ENCODE measurements at regions of chr19 and their contacts with region 1.

Region 1: GRCh38 chr19:57389730-57390598 is at the start of gene ZNF548:
- DNase-seq: peak; percentile 92
- H3K4me3 Mint-ChIP-seq: peak within 1 kb of the TSS; percentile 94
- H3K27ac Mint-ChIP-seq: peak within 1 kb of the TSS; percentile 94
- H3K4me1 Mint-ChIP-seq: peaks cover 30% of the 10 kb centered on the region
- H3K27me3 Mint-ChIP-seq: no peaks in the 10 kb centered on the region
- total RNA-seq, gene ZNF548: 11.3 and 12.1 TPM in 2 replicates

Region 2: GRCh38 chr19:55536951-55537740 is 1852.8 kb before region 1 on chr19 and contains the start of gene SBK2:
- intact Hi-C with region 1: no loop called
- DNase-seq: no peak
- H3K4me3 Mint-ChIP-seq: no peak within 1 kb of the TSS
- H3K27ac Mint-ChIP-seq: no peak within 1 kb of the TSS
- H3K4me1 Mint-ChIP-seq: no peaks in the 10 kb centered on the region
- H3K27me3 Mint-ChIP-seq: no peaks in the 10 kb centered on the region
- total RNA-seq, gene SBK2: not detected in 2 replicates

Region 3: GRCh38 chr19:57227502-57227901 is 162.5 kb before region 1 on chr19:
- intact Hi-C with region 1: no loop called
- DNase-seq: no peak
- H3K4me3 Mint-ChIP-seq: no peak overlapping the region
- H3K27ac Mint-ChIP-seq: no peak overlapping the region
- H3K4me1 Mint-ChIP-seq: no peaks in the 10 kb centered on the region
- H3K27me3 Mint-ChIP-seq: no peaks in the 10 kb centered on the region

Region 4: GRCh38 chr19:57240311-57241090 is 149.5 kb before region 1 on chr19 and contains the start of gene ZNF805:
- intact Hi-C with region 1: loop called (anchors 1 kb)
- DNase-seq: peak; percentile 93
- H3K4me3 Mint-ChIP-seq: peak within 1 kb of the TSS; percentile 92
- H3K27ac Mint-ChIP-seq: peak within 1 kb of the TSS; percentile 97
- H3K4me1 Mint-ChIP-seq: peaks cover 14% of the 10 kb centered on the region
- H3K27me3 Mint-ChIP-seq: no peaks in the 10 kb centered on the region
- total RNA-seq, gene ZNF805: 6.9 and 8.4 TPM in 2 replicates

Region 5: DNA sequence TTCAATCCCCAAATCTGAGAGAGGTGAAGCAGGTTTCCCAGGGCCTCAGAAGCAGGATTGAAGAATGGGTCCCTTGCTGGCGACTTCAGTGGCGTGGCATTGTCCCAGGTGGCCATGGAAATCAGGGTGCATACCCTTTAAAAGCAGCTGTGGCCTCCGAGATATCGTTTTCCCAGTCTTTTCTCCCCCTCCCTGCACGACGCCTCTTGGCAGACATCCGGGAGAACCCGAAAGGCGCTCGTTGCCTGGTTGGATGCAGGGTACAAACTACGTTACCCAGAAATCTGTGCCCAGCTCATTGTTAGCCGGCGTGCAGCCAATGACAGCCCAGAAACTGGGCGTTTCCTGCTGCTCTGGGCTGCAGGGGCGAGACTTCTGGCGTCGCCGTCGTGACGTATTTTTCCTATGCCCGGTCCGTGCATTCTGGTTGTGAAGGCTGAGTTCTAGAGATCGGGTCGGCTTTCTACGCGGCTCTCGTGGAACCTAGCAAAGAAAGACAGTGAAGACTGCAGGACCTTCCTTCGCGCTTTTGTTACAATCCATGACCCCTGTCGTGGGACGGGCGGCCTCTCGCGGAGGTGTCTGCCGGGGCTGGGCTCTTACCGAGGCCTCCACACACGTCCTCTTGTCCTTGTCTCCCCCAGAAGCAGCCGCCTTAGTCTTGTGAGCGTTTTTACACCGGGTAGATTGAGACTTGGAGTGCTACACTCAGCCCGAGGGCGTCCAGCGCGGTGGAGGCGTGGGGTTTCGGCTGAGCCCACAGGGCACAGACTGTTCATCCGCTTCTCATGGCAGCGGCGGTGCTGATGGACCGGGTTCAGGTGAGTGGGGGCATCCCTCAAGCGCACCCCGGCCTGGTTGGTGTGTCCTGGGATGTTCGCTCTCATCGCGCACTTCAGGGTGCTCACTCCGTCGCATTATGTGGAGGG is 38.8 kb before region 1 on chr19 and contains the start of gene ZNF304:
- intact Hi-C with region 1: loop called (anchors 1 kb)
- DNase-seq: peak; percentile 84
- H3K4me3 Mint-ChIP-seq: peak within 1 kb of the TSS; percentile 92
- H3K27ac Mint-ChIP-seq: peak within 1 kb of the TSS; percentile 90
- H3K4me1 Mint-ChIP-seq: peaks cover 29% of the 10 kb centered on the region
- H3K27me3 Mint-ChIP-seq: no peaks in the 10 kb centered on the region
- total RNA-seq, gene ZNF304: 6.1 and 6.6 TPM in 2 replicates

Region 6: DNA sequence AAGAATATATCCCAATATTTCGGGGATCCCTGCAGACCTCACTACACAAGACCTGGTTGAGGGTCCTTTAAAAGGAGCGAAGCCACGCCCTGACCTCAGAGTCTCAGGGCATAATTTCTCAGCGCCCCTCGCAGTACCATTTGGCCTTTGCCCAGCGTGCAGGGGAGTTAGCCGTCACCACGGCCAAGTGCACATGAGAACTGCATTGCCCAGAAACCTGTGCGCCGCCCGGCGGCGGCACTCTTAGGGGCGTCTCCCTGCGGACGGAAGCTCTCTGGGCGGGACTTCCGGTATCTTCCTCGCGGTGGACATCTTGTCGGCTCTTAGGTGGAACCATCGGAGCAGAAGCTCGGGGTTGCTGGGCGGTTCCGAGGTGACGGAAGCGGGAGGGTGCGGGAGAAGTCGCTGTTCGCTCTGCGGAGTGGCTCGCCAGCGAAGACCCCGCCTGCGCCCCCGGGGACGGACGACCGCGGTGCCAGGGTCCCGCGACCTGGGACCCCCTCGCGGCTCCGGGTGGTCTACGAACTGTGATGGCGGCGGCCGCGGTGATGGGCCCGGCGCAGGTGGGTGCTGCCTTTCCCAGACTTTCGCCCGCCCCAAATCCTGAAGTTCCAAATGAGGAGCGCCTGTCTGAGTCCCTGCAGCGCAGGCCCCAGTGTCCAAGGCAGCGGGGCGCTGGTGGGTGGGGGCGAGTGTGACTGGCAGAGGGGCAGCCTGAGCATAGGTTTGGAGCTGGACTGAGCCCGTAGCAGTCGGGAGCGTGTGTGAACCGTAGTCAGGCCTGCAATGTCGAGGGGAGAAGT is 224.2 kb after region 1 on chr19 and contains the start of gene ZNF134:
- intact Hi-C with region 1: loop called (anchors 1 kb)
- DNase-seq: peak; percentile 84
- H3K4me3 Mint-ChIP-seq: peak within 1 kb of the TSS; percentile 90
- H3K27ac Mint-ChIP-seq: peak within 1 kb of the TSS; percentile 78
- H3K4me1 Mint-ChIP-seq: peaks cover 11% of the 10 kb centered on the region
- H3K27me3 Mint-ChIP-seq: no peaks in the 10 kb centered on the region
- total RNA-seq, gene ZNF134: 8.4 and 9.4 TPM in 2 replicates